CD8-positive, alpha-beta T cell (primary cell): ENCODE measurements at regions of chr7 and their contacts with region 1.

Region 1: DNA sequence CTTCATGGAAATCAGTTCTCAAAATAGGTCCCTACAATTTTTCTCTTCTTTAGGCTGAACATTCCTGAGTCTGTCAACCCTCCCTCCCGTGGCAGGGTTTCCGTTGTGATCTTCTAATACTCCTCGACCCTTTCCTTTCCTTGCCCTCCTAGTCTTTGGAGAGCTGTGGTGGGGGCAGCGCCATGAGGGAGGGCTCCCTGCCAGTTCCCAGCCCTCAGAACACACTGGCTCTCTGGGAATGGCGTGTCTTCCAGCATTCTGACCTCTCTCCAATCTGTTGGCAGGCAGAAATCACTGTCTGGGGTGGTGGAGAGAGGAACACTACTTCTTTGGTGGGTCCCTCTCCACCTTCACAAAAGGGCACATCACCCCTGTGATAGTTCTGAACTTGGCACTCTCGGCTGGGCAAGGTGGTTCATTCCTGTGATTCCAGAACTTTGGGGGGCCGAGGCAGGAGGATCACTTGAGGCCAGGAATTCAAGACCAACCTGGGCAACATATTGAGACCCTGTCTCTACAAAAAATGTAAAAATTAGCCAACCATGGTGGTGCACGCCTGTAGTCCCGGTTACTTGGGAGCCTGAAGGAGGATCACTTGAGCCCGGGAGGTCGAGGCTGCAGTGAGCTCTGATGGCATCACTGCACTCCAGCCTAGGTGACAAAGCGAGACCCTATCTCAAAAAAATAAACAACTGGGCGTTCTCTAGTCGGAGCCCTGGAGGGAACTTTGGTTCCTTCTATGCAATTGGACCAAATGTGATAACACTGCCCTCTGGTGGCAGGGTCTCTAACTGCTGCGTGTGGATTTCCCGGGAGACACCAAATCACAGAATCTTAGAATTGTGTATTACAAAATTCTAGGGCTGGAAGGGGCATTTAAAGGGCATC is 13.1 kb upstream of the ARPC1A start:
- DNase-seq: peak; percentile 47 to 85 (median 75)
- ATAC-seq: peak; percentile 84
- H3K4me3 ChIP-seq: peak overlapping the region in 1 of 2 experiments; percentile 7
- H3K4me3 Mint-ChIP-seq: peak overlapping the region; percentile 62
- H3K27ac ChIP-seq: no peak overlapping the region
- H3K27ac Mint-ChIP-seq: no peak overlapping the region
- H3K4me1 ChIP-seq: no peaks in the 10 kb centered on the region
- H3K4me1 Mint-ChIP-seq: peaks cover 2% of the 10 kb centered on the region
- H3K27me3 ChIP-seq: peaks cover 0 to 4% of the 10 kb centered on the region in 2 experiments
- H3K27me3 Mint-ChIP-seq: peaks cover 2% of the 10 kb centered on the region
- CTCF ChIP-seq: peak; percentile 90

Region 2: DNA sequence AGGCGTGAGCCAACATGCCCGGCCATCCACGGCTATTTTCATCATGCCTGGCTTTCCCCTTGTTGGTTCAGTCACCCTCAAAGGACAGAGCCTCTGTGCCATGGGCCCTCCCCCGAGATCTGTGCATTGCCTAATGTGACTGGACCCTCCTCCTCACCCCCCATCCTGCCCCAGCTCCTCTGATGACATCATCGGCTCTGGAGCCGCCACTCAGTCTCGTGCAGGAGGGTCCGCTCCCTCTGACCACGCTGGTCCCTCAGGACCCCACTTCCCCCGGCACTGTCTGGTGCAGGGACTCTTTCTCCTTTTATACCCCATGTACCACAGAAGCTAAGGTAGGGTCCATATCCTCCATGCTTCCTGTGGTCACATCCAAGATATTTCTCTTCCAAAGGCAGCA is 878.5 kb before region 1 on chr7:
- CTCF ChIA-PET with region 1: no interaction called
- POLR2A ChIA-PET with region 1: no interaction called
- intact Hi-C with region 1: loop called in 1 of 2 experiments (anchors 2 kb)
- DNase-seq: no peak
- ATAC-seq: no peak
- H3K4me3 ChIP-seq: no peak overlapping the region
- H3K4me3 Mint-ChIP-seq: no peak overlapping the region
- H3K27ac ChIP-seq: no peak overlapping the region
- H3K27ac Mint-ChIP-seq: no peak overlapping the region
- H3K4me1 ChIP-seq: no peaks in the 10 kb centered on the region
- H3K4me1 Mint-ChIP-seq: peaks cover 5% of the 10 kb centered on the region
- H3K27me3 ChIP-seq: no peaks in the 10 kb centered on the region
- H3K27me3 Mint-ChIP-seq: peaks cover 4% of the 10 kb centered on the region
- CTCF ChIP-seq: no peak

Region 3: GRCh38 chr7:98988641-98989040 is 323.9 kb before region 1 on chr7:
- CTCF ChIA-PET with region 1: interaction called, 5 read pairs
- POLR2A ChIA-PET with region 1: no interaction called
- intact Hi-C with region 1: loop called in 1 of 2 experiments (anchors 5 kb)
- DNase-seq: no peak
- ATAC-seq: no peak
- H3K4me3 ChIP-seq: peak overlapping the region in 1 of 2 experiments; percentile 14
- H3K4me3 Mint-ChIP-seq: peak overlapping the region; percentile 40
- H3K27ac ChIP-seq: peak overlapping the region; percentile 30 to 43
- H3K27ac Mint-ChIP-seq: peak overlapping the region; percentile 91
- H3K4me1 ChIP-seq: peaks cover 26% of the 10 kb centered on the region
- H3K4me1 Mint-ChIP-seq: peaks cover 33% of the 10 kb centered on the region
- H3K27me3 ChIP-seq: no peaks in the 10 kb centered on the region
- H3K27me3 Mint-ChIP-seq: no peaks in the 10 kb centered on the region
- CTCF ChIP-seq: no peak

Region 4: GRCh38 chr7:99040104-99040958 is 272.2 kb before region 1 on chr7:
- CTCF ChIA-PET with region 1: interaction called, 118 read pairs
- POLR2A ChIA-PET with region 1: no interaction called
- intact Hi-C with region 1: loop called (anchors 1 kb)
- DNase-seq: peak; percentile 14 to 79 (median 65)
- ATAC-seq: peak; percentile 79
- H3K4me3 ChIP-seq: no peak overlapping the region
- H3K4me3 Mint-ChIP-seq: no peak overlapping the region
- H3K27ac ChIP-seq: no peak overlapping the region
- H3K27ac Mint-ChIP-seq: no peak overlapping the region
- H3K4me1 ChIP-seq: no peaks in the 10 kb centered on the region
- H3K4me1 Mint-ChIP-seq: no peaks in the 10 kb centered on the region
- H3K27me3 ChIP-seq: no peaks in the 10 kb centered on the region
- H3K27me3 Mint-ChIP-seq: no peaks in the 10 kb centered on the region
- CTCF ChIP-seq: peak; percentile 76

Region 5: GRCh38 chr7:99046722-99047121 is 265.8 kb before region 1 on chr7:
- CTCF ChIA-PET with region 1: interaction called, 118 read pairs
- POLR2A ChIA-PET with region 1: no interaction called
- intact Hi-C with region 1: no loop called
- DNase-seq: no peak
- ATAC-seq: no peak
- H3K4me3 ChIP-seq: no peak overlapping the region
- H3K4me3 Mint-ChIP-seq: no peak overlapping the region
- H3K27ac ChIP-seq: no peak overlapping the region
- H3K27ac Mint-ChIP-seq: no peak overlapping the region
- H3K4me1 ChIP-seq: no peaks in the 10 kb centered on the region
- H3K4me1 Mint-ChIP-seq: no peaks in the 10 kb centered on the region
- H3K27me3 ChIP-seq: no peaks in the 10 kb centered on the region
- H3K27me3 Mint-ChIP-seq: no peaks in the 10 kb centered on the region
- CTCF ChIP-seq: no peak

Region 6: GRCh38 chr7:99386584-99387238 is 74.2 kb after region 1 on chr7:
- CTCF ChIA-PET with region 1: no interaction called
- POLR2A ChIA-PET with region 1: no interaction called
- intact Hi-C with region 1: no loop called
- DNase-seq: peak in 5 of 9 experiments; percentile 47 to 73 (median 60)
- ATAC-seq: peak; percentile 75
- H3K4me3 ChIP-seq: no peak overlapping the region
- H3K4me3 Mint-ChIP-seq: no peak overlapping the region
- H3K27ac ChIP-seq: no peak overlapping the region
- H3K27ac Mint-ChIP-seq: peak overlapping the region; percentile 75
- H3K4me1 ChIP-seq: peaks cover 20% of the 10 kb centered on the region
- H3K4me1 Mint-ChIP-seq: peaks cover 27% of the 10 kb centered on the region
- H3K27me3 ChIP-seq: no peaks in the 10 kb centered on the region
- H3K27me3 Mint-ChIP-seq: no peaks in the 10 kb centered on the region
- CTCF ChIP-seq: peak; percentile 27